ENCODE measurements at regions of chr1 and their contacts with region 1.

Region 1: GRCh38 chr1:203267347-203267846 is 37.9 kb upstream of the BTG2 start:
- DNase-seq: peak; percentile 57
- H3K4me3 ChIP-seq: peak overlapping the region; percentile 79
- H3K27ac ChIP-seq: no peak overlapping the region
- H3K27me3 ChIP-seq: peaks cover 16% of the 10 kb centered on the region
- CTCF ChIP-seq: peak; percentile 97

Region 2: GRCh38 chr1:203026031-203026989 is 241.1 kb before region 1 on chr1 and contains the start of gene PPFIA4:
- CTCF ChIA-PET with region 1: interaction called, 22 read pairs
- POLR2A ChIA-PET with region 1: no interaction called
- DNase-seq: peak; percentile 58
- H3K4me3 ChIP-seq: peak within 1 kb of the TSS; percentile 72
- H3K27ac ChIP-seq: no peak within 1 kb of the TSS
- H3K27me3 ChIP-seq: peaks cover 21% of the 10 kb centered on the region
- CTCF ChIP-seq: no peak
- polyA plus RNA-seq, gene PPFIA4: 0.82 and 1.5 TPM in 2 replicates

Region 3: DNA sequence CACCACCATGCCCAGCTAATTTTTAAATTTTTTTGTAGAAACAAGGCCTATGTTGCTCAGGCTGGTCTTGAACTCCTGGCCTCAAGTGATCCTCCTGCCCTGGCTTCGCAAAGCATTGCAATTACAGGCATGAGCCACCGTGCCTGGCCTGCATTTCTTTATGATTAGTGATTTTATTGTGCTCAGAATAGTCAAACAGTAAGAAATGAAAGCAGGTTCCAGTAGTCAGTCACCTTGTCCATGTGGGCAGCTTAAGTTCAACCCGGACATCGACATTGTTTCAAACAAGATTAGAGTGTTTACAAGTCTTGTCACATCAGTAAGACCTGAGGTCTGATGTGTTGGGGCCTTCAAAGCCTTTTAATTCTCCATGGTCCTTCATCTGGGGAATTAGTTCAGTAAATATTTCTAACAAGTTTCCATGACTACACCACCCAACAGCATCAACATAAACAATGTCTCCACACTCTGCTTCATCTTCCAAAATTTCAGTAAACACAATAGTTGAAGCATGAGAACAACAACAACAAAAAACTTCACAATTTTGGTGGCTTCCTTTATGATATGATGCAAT is 155.0 kb before region 1 on chr1:
- CTCF ChIA-PET with region 1: interaction called, 164 read pairs
- POLR2A ChIA-PET with region 1: no interaction called
- DNase-seq: no peak
- H3K4me3 ChIP-seq: no peak overlapping the region
- H3K27ac ChIP-seq: no peak overlapping the region
- H3K27me3 ChIP-seq: peaks cover 44% of the 10 kb centered on the region
- CTCF ChIP-seq: no peak

Region 4: GRCh38 chr1:203229471-203230135 is 37.8 kb before region 1 on chr1 and contains the start of gene CHIT1:
- CTCF ChIA-PET with region 1: interaction called, 11 read pairs
- POLR2A ChIA-PET with region 1: no interaction called
- DNase-seq: no peak
- H3K4me3 ChIP-seq: no peak within 1 kb of the TSS
- H3K27ac ChIP-seq: no peak within 1 kb of the TSS
- H3K27me3 ChIP-seq: peaks cover 58% of the 10 kb centered on the region
- CTCF ChIP-seq: no peak
- polyA plus RNA-seq, gene CHIT1: not detected in 2 replicates

Region 5: DNA sequence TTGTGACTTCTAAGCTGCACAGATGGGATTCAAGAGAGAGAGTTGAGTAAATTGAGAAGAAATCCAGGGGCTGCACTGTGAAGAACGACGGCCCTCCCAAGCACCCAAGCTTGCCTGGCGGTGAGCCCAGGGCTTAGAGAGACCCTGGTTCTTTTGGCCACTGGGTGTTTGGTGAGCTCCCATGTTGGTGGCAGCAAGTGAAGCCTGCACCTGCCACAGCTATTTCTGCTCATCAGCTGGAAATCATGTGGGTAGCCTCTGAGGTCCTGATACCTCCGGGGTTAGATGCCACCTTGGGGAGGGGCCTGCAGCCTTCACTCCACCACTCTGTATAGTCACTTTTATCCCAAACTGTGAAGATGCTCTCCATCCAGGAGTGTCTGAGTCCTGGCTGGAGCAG is 31.8 kb after region 1 on chr1:
- CTCF ChIA-PET with region 1: interaction called, 11 read pairs
- POLR2A ChIA-PET with region 1: no interaction called
- DNase-seq: no peak
- H3K4me3 ChIP-seq: no peak overlapping the region
- H3K27ac ChIP-seq: no peak overlapping the region
- H3K27me3 ChIP-seq: peaks cover 35% of the 10 kb centered on the region
- CTCF ChIP-seq: no peak

Region 6: GRCh38 chr1:203440771-203441170 is 173.4 kb after region 1 on chr1:
- CTCF ChIA-PET with region 1: interaction called, 11 read pairs
- POLR2A ChIA-PET with region 1: no interaction called
- DNase-seq: peak; percentile 37
- H3K4me3 ChIP-seq: no peak overlapping the region
- H3K27ac ChIP-seq: no peak overlapping the region
- H3K27me3 ChIP-seq: peaks cover 44% of the 10 kb centered on the region
- CTCF ChIP-seq: peak; percentile 70

Measured in AG04450 (cell line).